Mammary epithelial cell (primary cell): ENCODE measurements at regions of chr10 and their contacts with region 1.

Region 1: GRCh38 chr10:78657163-78657861 is 411.5 kb upstream of the ZMIZ1 start:
- DNase-seq: peak; percentile 37
- H3K4me3 ChIP-seq: no peak overlapping the region
- H3K27ac ChIP-seq: no peak overlapping the region
- H3K4me1 ChIP-seq: no peaks in the 10 kb centered on the region
- H3K27me3 ChIP-seq: no peaks in the 10 kb centered on the region
- CTCF ChIP-seq: peak; percentile 78 to 95

Region 2: GRCh38 chr10:78211561-78212051 is 445.7 kb before region 1 on chr10:
- CTCF ChIA-PET with region 1: no interaction called
- dilution Hi-C with region 1: no loop called
- in situ Hi-C with region 1: no loop called
- intact Hi-C with region 1: loop called (anchors 1 kb)
- DNase-seq: peak; percentile 11
- H3K4me3 ChIP-seq: no peak overlapping the region
- H3K27ac ChIP-seq: no peak overlapping the region
- H3K4me1 ChIP-seq: no peaks in the 10 kb centered on the region
- H3K27me3 ChIP-seq: no peaks in the 10 kb centered on the region
- CTCF ChIP-seq: peak; percentile 31 to 69

Region 3: DNA sequence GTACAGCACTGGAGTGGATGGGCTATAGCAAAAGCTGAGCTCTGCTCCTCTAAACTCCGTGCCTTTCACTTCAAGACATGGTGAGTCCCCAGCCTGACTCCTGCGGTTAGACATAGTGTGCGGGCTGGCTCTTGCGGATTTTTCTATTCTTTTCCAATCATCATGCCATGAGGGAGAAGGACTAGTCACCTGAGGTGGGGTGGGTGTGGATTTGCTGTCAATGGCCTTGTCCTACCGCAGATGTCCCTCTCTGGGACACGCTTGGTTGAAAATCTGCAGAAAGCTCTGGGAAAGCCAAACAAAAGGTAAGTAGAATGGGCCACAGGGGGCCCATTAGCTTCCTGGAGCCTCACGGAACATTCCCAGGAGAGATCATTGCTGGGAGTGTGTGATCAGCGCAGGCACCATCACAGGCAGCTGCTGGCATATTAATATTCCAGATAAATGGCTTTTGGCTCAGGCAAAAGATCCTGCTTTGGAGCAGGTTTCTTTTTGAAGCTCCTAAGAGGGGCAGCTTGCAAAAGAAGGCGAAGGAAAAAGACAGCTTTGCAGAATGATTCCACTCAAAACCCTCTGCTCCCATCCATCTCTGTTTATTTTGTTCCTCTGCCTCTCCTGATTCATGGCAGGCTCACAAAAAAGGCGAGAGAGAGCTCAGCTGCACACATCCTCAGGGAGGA is 97.5 kb before region 1 on chr10:
- CTCF ChIA-PET with region 1: no interaction called
- dilution Hi-C with region 1: no loop called
- in situ Hi-C with region 1: no loop called
- intact Hi-C with region 1: no loop called
- DNase-seq: no peak
- H3K4me3 ChIP-seq: no peak overlapping the region
- H3K27ac ChIP-seq: no peak overlapping the region
- H3K4me1 ChIP-seq: no peaks in the 10 kb centered on the region
- H3K27me3 ChIP-seq: peaks cover 4% of the 10 kb centered on the region
- CTCF ChIP-seq: no peak